ENCODE measurements at regions of chr5 and their contacts with region 1.

Region 1: DNA sequence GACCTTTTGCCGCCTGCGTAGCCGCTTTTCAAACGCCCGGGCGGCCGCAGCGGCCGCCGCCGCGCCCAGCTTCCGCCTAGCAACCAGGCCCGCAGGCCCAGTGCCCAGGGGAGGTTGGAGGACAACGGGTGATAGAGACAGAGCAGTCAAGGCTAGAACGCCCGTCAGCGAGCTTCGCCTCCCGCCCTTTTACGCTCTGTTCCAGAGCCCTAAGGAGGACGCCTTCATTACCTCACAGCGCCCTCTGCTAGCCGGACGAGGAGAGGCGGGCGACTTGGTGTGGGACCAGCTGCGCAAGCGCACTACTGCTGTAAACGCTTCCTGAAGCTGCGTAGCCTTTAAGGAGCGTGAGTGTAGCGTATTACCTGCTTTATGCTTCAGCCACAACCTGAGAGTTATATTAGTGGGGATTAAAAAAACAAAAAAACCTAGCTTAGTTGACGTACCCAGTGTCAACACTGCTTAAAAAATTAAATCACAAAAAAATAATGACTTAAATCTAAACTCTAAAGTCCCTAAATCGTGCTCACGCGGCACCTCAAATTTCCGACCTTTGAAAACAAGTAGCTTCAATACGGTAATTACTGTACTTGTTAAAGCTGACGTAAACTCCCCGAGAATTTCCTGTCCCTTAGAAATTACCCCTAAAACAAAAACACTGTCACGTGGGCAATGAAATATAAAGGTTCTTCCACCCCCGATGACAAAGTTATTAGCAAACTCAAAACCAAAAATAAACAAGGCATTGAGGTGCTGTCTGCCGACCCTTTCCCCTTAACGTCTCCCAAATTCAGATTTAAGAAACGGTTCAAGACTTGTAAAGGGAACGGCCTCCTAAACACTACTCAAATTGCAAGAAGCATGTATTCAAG is at the start of gene CEP120:
- DNase-seq: peak; percentile 99
- H3K4me3 Mint-ChIP-seq: no peak within 1 kb of the TSS
- H3K27ac Mint-ChIP-seq: no peak within 1 kb of the TSS
- H3K4me1 Mint-ChIP-seq: peaks cover 17% of the 10 kb centered on the region
- H3K27me3 Mint-ChIP-seq: no peaks in the 10 kb centered on the region
- total RNA-seq, gene CEP120: 28.6 and 31.6 TPM in 2 replicates

Region 2: DNA sequence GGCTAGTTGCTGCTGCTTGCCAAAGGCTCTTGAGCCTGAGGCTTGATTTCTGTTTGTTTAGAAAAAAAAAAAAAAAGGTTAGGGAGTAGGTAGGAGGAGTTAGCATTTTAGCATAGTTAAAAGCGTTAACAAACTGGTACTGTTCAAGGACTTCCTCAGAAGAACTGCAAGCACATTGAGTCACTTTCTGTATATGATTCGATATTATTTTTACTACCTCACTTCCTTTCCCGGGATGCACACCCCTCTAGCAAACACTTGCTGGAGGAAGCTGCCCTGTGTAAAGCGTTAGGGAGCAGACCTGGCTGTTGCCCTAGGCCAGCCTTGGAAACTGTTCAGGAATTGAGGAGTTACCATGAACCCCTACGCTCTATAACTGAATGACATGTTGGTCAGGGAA is 15.4 kb after region 1 on chr5:
- intact Hi-C with region 1: loop called (anchors 1 kb)
- DNase-seq: peak; percentile 78
- H3K4me3 Mint-ChIP-seq: peak overlapping the region; percentile 32
- H3K27ac Mint-ChIP-seq: peak overlapping the region; percentile 87
- H3K4me1 Mint-ChIP-seq: peaks cover 27% of the 10 kb centered on the region
- H3K27me3 Mint-ChIP-seq: no peaks in the 10 kb centered on the region

Region 3: GRCh38 chr5:123448017-123448617 is 24.6 kb after region 1 on chr5:
- intact Hi-C with region 1: loop called (anchors 1 kb)
- DNase-seq: peak; percentile 81
- H3K4me3 Mint-ChIP-seq: peak overlapping the region; percentile 36
- H3K27ac Mint-ChIP-seq: peak overlapping the region; percentile 83
- H3K4me1 Mint-ChIP-seq: peaks cover 35% of the 10 kb centered on the region
- H3K27me3 Mint-ChIP-seq: peaks cover 10% of the 10 kb centered on the region

Region 4: GRCh38 chr5:123511648-123512605 is 88.4 kb after region 1 on chr5 and contains the start of gene CSNK1G3:
- intact Hi-C with region 1: loop called (anchors 1 kb)
- DNase-seq: peak; percentile 97
- H3K4me3 Mint-ChIP-seq: peak within 1 kb of the TSS; percentile 90
- H3K27ac Mint-ChIP-seq: peak within 1 kb of the TSS; percentile 99
- H3K4me1 Mint-ChIP-seq: peaks cover 35% of the 10 kb centered on the region
- H3K27me3 Mint-ChIP-seq: peaks cover 11% of the 10 kb centered on the region
- total RNA-seq, gene CSNK1G3: 36.6 and 40.0 TPM in 2 replicates

Region 5: GRCh38 chr5:123545506-123545905 is 122.0 kb after region 1 on chr5:
- intact Hi-C with region 1: loop called (anchors 1 kb)
- DNase-seq: no peak
- H3K4me3 Mint-ChIP-seq: no peak overlapping the region
- H3K27ac Mint-ChIP-seq: no peak overlapping the region
- H3K4me1 Mint-ChIP-seq: peaks cover 41% of the 10 kb centered on the region
- H3K27me3 Mint-ChIP-seq: no peaks in the 10 kb centered on the region

Measured in activated CD4-positive, alpha-beta T cell treated with anti-CD3 and anti-CD28 coated beads, Interleukin-2, amount 10 ng/mL, durations not matched to agents 24 days and 14 days (primary cell).